ENCODE measurements at regions of chr1 and their contacts with region 1.

Region 1: GRCh38 chr1:8651236-8651890 is 166.1 kb downstream of the RERE start:
- DNase-seq: peak; percentile 50
- H3K4me3 Mint-ChIP-seq: no peak overlapping the region
- H3K27ac Mint-ChIP-seq: peak overlapping the region; percentile 69
- H3K4me1 Mint-ChIP-seq: peaks cover 59% of the 10 kb centered on the region
- H3K27me3 Mint-ChIP-seq: no peaks in the 10 kb centered on the region

Region 2: DNA sequence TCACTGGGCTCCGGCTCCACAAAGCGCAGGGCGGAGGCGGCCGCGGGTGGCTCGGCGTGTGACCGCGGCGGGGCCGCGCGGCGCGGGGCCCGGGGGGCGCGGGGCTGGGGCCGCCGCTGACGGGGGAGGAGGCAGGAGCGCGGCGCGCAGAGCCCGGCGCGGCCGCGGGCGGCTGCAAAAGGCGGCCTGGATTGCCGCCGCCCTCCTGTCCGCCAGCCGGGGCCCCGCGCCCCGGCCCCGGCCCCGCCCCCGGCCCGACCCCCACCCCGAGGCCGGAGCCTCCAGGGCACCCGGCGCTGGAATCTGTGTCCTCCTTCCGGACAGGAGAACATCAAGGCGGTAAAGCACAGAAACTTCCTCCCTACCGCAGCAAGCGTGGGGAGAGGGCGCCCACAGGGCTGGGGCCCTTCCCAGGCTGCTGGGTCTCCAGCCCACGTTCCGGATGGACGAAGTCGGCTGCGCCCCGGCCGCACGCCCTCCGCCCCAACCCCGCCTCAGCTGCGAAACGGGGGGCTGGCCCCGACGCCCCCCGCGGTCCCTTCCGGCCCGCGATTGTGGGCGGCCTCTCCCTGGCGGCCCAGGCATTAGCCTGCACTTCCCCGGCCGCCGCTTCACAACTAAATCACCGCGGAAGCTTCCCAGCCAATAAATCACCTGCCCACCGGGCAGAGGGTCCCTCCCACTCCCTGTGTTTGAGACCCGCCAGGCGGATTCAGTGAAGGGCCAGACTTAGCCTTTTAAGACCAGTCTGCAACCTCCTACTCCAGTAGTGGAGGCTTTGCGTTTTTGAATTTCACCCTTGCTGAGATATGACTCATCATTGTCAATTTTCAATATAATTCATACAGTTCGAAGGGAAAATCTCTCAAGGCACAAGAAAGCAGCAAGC is 227.5 kb before region 1 on chr1:
- CTCF ChIA-PET with region 1: no interaction called
- POLR2A ChIA-PET with region 1: no interaction called
- DNase-seq: peak; percentile 56
- H3K4me3 Mint-ChIP-seq: peak overlapping the region; percentile 84
- H3K27ac Mint-ChIP-seq: peak overlapping the region; percentile 94
- H3K4me1 Mint-ChIP-seq: peaks cover 40% of the 10 kb centered on the region
- H3K27me3 Mint-ChIP-seq: no peaks in the 10 kb centered on the region

Region 3: DNA sequence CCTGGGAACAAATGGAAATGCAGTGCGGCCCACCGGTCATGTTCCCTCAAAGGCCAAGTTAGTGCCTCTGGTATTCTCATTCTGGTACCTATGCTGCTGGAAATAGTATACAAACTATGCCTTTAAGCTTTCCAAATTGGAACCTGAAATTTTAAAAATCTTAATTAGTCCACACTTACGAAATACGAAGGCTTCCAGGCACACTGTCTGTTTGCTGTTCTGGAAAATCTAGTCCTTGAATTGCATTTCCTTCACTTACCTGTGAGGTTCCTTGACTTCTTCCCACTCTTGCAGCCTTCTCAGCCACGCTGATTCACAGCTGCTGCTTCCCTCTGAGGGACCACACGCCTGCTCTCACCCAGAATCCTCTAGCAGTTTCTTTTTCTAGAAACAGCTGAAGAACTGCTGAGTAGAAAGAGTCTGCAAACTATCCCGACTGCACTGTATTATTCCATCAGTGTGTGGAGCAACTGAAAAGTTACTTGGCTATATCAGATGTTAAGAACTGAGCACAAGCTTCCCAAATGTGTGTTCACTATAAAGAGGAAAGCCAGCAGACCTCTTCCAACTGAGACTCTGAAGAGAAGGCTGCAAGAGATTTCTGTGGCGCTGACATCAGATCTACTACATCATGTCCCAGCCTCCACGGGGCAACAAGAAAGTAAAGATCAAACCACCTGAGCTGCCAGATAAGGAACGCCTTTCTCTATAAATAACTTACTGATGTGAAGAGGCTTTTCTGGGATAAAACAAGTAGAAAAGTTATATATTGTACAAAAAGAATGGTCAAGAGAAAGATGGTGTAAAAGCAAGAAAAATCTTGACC is 60.6 kb before region 1 on chr1:
- CTCF ChIA-PET with region 1: no interaction called
- POLR2A ChIA-PET with region 1: no interaction called
- DNase-seq: no peak
- H3K4me3 Mint-ChIP-seq: no peak overlapping the region
- H3K27ac Mint-ChIP-seq: peak overlapping the region; percentile 15
- H3K4me1 Mint-ChIP-seq: peaks cover 33% of the 10 kb centered on the region
- H3K27me3 Mint-ChIP-seq: no peaks in the 10 kb centered on the region

Region 4: GRCh38 chr1:8671306-8671917 is 20.0 kb after region 1 on chr1:
- CTCF ChIA-PET with region 1: interaction called, 6 read pairs
- POLR2A ChIA-PET with region 1: interaction called, 12 read pairs
- DNase-seq: no peak
- H3K4me3 Mint-ChIP-seq: no peak overlapping the region
- H3K27ac Mint-ChIP-seq: no peak overlapping the region
- H3K4me1 Mint-ChIP-seq: peaks cover 39% of the 10 kb centered on the region
- H3K27me3 Mint-ChIP-seq: no peaks in the 10 kb centered on the region